Activated CD4-positive, alpha-beta T cell treated with anti-CD3 and anti-CD28 coated beads, Interleukin-2, amount 10 ng/mL, durations not matched to agents 24 days and 14 days (primary cell): ENCODE measurements at regions of chr5 and their contacts with region 1.

Region 1: GRCh38 chr5:59810041-59810440 is 83.5 kb downstream of the PDE4D start:
- DNase-seq: peak; percentile 86
- H3K4me3 Mint-ChIP-seq: peak overlapping the region; percentile 29
- H3K27ac Mint-ChIP-seq: no peak overlapping the region
- H3K4me1 Mint-ChIP-seq: peaks cover 2% of the 10 kb centered on the region
- H3K27me3 Mint-ChIP-seq: peaks cover 18% of the 10 kb centered on the region

Region 2: GRCh38 chr5:59893429-59894227 is 83.6 kb after region 1 on chr5 and contains the start of gene PDE4D:
- intact Hi-C with region 1: no loop called
- DNase-seq: peak; percentile 63
- H3K4me3 Mint-ChIP-seq: no peak within 1 kb of the TSS
- H3K27ac Mint-ChIP-seq: no peak within 1 kb of the TSS
- H3K4me1 Mint-ChIP-seq: no peaks in the 10 kb centered on the region
- H3K27me3 Mint-ChIP-seq: peaks cover 37% of the 10 kb centered on the region
- total RNA-seq, gene PDE4D: 47.7 and 50.1 TPM in 2 replicates

Region 3: GRCh38 chr5:60161340-60161934 is 351.4 kb after region 1 on chr5:
- intact Hi-C with region 1: loop called (anchors 5 kb)
- DNase-seq: no peak
- H3K4me3 Mint-ChIP-seq: no peak overlapping the region
- H3K27ac Mint-ChIP-seq: no peak overlapping the region
- H3K4me1 Mint-ChIP-seq: no peaks in the 10 kb centered on the region
- H3K27me3 Mint-ChIP-seq: no peaks in the 10 kb centered on the region

Region 4: DNA sequence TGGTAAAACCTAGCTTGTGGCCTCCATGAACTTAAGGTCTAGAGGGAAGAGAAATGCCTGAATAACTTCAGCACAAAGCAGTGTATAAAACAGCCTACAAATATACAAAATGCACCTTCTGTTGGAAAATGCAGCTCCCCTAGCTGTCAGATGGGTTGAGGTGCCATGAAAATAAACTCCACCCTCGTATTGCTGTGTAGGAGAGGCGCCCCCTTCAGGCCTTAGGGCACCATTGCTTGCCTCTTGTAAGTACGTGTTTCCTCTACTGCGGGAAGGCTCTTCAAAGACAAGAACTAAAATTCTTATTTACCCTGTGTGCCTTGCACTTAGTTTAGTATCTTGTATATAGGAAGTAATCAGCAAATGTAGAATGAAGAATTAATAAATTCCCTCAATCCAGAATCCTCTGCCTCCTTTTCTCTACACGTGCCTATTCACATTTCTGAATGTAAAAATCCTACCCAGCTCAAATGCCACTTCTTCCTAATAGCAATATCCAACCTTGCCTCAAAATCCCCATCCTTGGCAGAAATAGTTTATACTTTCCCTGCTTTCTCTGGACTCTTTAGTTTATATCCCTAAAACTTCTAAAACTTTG is 477.2 kb after region 1 on chr5:
- intact Hi-C with region 1: loop called (anchors 5 kb)
- DNase-seq: peak; percentile 63
- H3K4me3 Mint-ChIP-seq: no peak overlapping the region
- H3K27ac Mint-ChIP-seq: no peak overlapping the region
- H3K4me1 Mint-ChIP-seq: no peaks in the 10 kb centered on the region
- H3K27me3 Mint-ChIP-seq: no peaks in the 10 kb centered on the region

Region 5: GRCh38 chr5:60382716-60383115 is 572.7 kb after region 1 on chr5:
- intact Hi-C with region 1: loop called (anchors 10 kb)
- DNase-seq: no peak
- H3K4me3 Mint-ChIP-seq: no peak overlapping the region
- H3K27ac Mint-ChIP-seq: no peak overlapping the region
- H3K4me1 Mint-ChIP-seq: no peaks in the 10 kb centered on the region
- H3K27me3 Mint-ChIP-seq: no peaks in the 10 kb centered on the region

Region 6: GRCh38 chr5:60649283-60649917 is 839.4 kb after region 1 on chr5:
- intact Hi-C with region 1: loop called (anchors 5 kb)
- DNase-seq: peak; percentile 60
- H3K4me3 Mint-ChIP-seq: no peak overlapping the region
- H3K27ac Mint-ChIP-seq: no peak overlapping the region
- H3K4me1 Mint-ChIP-seq: no peaks in the 10 kb centered on the region
- H3K27me3 Mint-ChIP-seq: no peaks in the 10 kb centered on the region

Region 7: DNA sequence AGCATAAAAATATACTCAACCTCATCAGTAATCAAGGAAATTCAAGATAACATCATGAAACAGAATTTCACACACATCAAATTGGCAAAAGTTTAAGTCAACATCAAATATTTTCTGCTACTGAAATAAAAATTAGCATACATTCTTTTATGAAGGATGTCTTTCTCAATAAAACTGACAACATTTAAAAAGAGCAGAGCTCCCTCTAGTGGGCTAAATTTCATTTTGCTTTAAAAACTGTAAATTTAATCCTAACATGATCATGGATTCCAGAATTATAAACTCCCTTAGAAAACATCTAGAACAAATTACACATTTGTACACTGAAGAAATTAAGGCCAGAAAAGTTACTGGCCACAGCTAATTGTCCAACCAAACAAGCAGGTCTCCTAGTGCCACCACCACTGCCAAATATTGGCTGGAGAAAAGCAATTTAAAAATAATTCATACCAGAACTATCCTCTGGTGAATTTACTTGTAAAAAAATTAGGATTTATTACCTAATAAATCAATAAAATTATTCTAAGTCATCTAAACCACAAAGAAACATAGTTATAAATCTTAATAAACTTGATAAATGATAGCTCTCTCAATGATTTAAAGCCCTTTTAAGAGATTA is 858.8 kb after region 1 on chr5:
- intact Hi-C with region 1: loop called (anchors 1 kb)
- DNase-seq: peak; percentile 61
- H3K4me3 Mint-ChIP-seq: no peak overlapping the region
- H3K27ac Mint-ChIP-seq: no peak overlapping the region
- H3K4me1 Mint-ChIP-seq: peaks cover 2% of the 10 kb centered on the region
- H3K27me3 Mint-ChIP-seq: no peaks in the 10 kb centered on the region